ENCODE measurements at regions of chr4 and their contacts with region 1.

Region 1: DNA sequence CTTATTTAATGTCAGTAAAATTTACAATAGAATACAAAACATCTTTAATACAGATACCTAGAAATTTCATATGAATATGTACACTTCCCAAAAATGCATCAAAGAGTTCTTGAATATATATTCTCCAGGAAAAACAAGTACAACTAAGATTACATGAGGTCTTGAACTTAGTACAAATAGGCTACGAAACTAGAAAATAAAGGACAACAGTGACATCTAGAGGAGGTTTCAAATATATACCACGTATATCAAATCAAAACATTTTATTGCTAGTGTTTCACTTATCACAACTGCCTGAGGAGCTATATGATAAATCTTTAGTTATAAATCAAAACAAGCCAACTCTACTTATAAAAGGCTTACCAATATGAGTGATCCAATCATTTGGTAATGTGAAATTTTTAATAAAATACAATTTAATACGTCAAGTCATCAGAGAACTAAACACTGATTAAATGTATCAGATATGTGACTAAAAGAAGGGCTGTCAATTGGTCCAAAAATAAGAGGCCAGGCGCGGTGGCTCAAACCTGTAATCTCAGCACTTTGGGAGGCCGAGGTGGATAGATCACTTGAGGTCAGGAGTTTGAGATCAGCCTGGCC is 36.6 kb downstream of the ANAPC10 start:
- DNase-seq: peak; percentile 21
- CTCF ChIP-seq: peak; percentile 30

Region 2: DNA sequence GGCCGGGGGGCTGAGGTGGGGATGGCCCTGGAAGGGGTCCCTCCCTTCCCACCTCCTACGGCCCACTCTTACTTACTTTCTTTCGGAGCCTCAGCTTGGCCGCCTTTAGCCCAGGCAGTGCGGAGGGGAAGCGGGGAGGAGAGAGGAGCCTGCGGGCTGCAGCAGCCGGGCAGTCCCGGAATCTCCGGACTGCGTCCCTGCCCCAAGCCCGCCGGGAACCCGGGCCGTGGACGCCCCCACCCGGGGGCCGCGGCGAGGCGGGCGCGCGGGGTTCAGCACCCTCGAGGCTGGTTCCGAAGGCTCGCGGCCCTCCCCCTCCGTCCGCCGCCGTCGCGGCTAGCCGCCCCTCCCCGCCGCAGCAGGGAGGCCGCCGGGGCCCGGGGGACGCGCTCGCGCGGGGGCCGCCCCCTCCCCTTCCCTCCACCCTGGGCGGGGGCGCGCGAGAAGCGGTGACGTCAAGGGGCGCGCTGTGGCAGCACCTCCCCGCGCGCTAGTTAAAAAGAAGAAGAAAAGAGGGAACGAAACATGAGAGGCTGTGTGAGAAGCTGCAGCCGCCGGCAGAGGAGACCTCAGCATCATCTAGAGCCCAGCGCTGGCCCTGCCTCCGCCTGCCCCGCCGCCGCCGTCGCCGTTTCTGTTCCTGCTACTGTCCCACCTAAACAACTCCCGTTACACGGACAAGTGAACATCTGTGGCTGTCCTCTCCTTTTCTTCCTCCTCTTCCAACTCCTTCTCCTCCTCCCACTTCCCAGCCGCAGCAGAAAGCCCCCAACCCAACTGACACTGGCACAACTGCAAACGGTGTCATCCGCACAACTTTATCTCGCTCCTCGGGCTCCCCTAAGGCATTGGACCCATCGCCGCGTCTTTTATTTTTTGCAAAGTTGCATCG is 415.5 kb before region 1 on chr4 and contains the start of gene HHIP:
- in situ Hi-C with region 1: loop called (anchors 25 kb)
- DNase-seq: peak; percentile 46
- CTCF ChIP-seq: no peak

Region 3: DNA sequence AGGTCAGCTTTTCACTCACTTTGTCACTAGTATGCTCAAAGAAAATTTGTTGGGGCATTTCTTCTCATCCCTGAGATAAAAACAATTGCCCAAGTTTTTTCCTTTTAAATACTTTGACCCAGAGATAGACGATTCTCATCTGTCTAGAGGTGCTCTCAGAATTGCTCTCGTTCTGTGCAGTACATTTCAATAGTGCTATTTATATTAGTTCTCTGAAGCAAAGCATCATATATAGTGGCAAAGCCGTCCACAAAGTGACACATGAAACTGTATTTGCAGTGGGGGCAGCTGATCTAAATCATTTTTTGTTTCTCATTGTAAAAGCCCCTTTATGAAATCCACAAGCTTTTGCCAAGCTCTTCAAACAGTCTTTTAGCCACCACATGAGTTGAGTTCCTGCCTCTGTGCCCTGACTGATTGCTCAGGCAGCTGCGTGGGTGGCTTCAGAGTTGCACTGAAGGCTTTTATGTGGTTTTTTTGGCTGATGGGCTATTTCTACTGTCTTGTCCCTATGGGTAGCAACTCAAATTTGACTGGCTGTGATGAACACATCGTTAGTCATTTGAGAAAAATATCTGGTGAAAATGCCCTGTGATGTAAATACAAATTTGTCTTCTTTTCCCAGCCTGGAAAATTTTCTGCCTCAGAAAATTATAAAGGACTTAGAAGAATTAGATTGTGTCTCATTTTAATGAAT is 238.1 kb after region 1 on chr4:
- in situ Hi-C with region 1: no loop called
- DNase-seq: peak; percentile 35
- CTCF ChIP-seq: no peak

Region 4: DNA sequence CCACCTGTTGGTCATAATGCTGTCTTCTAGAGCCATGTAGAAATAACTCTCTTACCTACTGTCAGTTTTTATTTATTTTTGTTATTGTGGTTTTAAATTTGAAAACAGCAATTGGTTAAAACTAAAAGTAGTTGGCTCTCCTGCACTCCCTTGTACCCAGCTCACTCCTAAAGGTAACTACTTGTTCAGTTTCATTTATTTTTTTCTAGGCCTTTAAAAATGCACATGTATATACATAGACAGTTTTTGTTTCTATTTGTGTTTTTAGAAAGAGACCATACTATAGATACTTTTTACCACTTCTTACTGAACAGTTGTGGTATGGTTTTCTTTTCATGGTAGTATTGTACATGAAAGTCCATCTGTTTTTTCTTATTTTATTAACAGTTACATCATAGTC is 437.0 kb after region 1 on chr4:
- in situ Hi-C with region 1: no loop called
- DNase-seq: no peak
- CTCF ChIP-seq: no peak

Measured in GM13976 (cell line).